Heart right ventricle (tissue), 16 donors: ENCODE measurements at regions of chr12 and their contacts with region 1.

Region 1: GRCh38 chr12:27305673-27306456 is 26.8 kb upstream of the BMAL2 start:
- DNase-seq: no peak
- ATAC-seq: peak in 4 of 8 donors; percentile 33 to 67 (median 46)
- H3K4me3 ChIP-seq: no peak overlapping the region
- H3K27ac ChIP-seq: peak overlapping the region in 4 of 10 donors; percentile 16 to 43 (median 34)
- H3K4me1 ChIP-seq: peaks cover 0 to 28% (median 6%) of the 10 kb centered on the region in 9 donors
- H3K27me3 ChIP-seq: no peaks in the 10 kb centered on the region
- CTCF ChIP-seq: peak; percentile 55 to 80 (median 71)

Region 2: GRCh38 chr12:26853303-26854030 is 452.4 kb before region 1 on chr12:
- intact Hi-C with region 1: loop called in 1 of 10 experiments (anchors 10 kb)
- DNase-seq: peak; percentile 61 to 65
- ATAC-seq: peak in 7 of 8 donors; percentile 73 to 87 (median 81)
- H3K4me3 ChIP-seq: no peak overlapping the region
- H3K27ac ChIP-seq: no peak overlapping the region
- H3K4me1 ChIP-seq: peaks cover 0 to 25% (median 11%) of the 10 kb centered on the region in 9 donors
- H3K27me3 ChIP-seq: no peaks in the 10 kb centered on the region
- CTCF ChIP-seq: peak; percentile 76 to 92 (median 88)

Region 3: GRCh38 chr12:27014085-27014858 is 291.6 kb before region 1 on chr12 and contains the start of gene TM7SF3:
- intact Hi-C with region 1: loop called in 6 of 10 experiments (anchors 2 to 5 kb)
- DNase-seq: peak; percentile 94
- ATAC-seq: peak; percentile 93 to 99 (median 96)
- H3K4me3 ChIP-seq: peak within 1 kb of the TSS; percentile 60 to 98 (median 79)
- H3K27ac ChIP-seq: peak within 1 kb of the TSS; percentile 73 to 95 (median 92)
- H3K4me1 ChIP-seq: peaks cover 0 to 54% (median 39%) of the 10 kb centered on the region in 9 donors
- H3K27me3 ChIP-seq: no peaks in the 10 kb centered on the region
- CTCF ChIP-seq: peak; percentile 92 to 99 (median 98)
- total RNA-seq, gene TM7SF3: 16.3 to 29.3 (median 23.7) TPM

Region 4: DNA sequence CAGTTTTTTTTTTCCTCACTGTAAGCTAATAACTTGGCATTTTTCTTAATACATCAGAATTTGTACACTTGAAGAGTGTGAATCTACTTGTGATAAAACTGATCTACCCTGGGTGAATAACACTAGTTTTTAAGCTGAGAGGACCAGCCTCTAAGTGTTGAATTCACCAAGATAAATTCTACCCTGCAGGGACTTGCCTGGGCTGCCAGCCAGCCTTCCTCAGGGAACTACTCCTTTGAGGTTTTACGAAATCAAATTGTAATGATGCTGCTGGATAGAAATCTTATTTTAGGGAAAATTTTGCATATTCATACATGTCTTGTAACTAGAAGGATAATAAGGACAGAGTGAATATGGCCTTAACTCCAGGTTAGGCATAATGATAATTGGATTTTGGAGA is 281.6 kb before region 1 on chr12:
- intact Hi-C with region 1: loop called in 5 of 10 experiments (anchors 5 to 10 kb)
- DNase-seq: no peak
- ATAC-seq: no peak
- H3K4me3 ChIP-seq: peak overlapping the region in 2 of 10 donors; percentile 62 to 79
- H3K27ac ChIP-seq: no peak overlapping the region
- H3K4me1 ChIP-seq: peaks cover 6 to 34% (median 18%) of the 10 kb centered on the region in 9 donors
- H3K27me3 ChIP-seq: no peaks in the 10 kb centered on the region
- CTCF ChIP-seq: no peak

Region 5: GRCh38 chr12:27260746-27261145 is 45.1 kb before region 1 on chr12:
- intact Hi-C with region 1: no loop called
- DNase-seq: no peak
- ATAC-seq: peak in 3 of 8 donors; percentile 22 to 65 (median 51)
- H3K4me3 ChIP-seq: no peak overlapping the region
- H3K27ac ChIP-seq: peak overlapping the region in 7 of 10 donors; percentile 18 to 70 (median 39)
- H3K4me1 ChIP-seq: peaks cover 0 to 75% (median 47%) of the 10 kb centered on the region in 9 donors
- H3K27me3 ChIP-seq: no peaks in the 10 kb centered on the region
- CTCF ChIP-seq: no peak